AG04450 (cell line): ENCODE measurements at regions of chr2 and their contacts with region 1.

Region 1: DNA sequence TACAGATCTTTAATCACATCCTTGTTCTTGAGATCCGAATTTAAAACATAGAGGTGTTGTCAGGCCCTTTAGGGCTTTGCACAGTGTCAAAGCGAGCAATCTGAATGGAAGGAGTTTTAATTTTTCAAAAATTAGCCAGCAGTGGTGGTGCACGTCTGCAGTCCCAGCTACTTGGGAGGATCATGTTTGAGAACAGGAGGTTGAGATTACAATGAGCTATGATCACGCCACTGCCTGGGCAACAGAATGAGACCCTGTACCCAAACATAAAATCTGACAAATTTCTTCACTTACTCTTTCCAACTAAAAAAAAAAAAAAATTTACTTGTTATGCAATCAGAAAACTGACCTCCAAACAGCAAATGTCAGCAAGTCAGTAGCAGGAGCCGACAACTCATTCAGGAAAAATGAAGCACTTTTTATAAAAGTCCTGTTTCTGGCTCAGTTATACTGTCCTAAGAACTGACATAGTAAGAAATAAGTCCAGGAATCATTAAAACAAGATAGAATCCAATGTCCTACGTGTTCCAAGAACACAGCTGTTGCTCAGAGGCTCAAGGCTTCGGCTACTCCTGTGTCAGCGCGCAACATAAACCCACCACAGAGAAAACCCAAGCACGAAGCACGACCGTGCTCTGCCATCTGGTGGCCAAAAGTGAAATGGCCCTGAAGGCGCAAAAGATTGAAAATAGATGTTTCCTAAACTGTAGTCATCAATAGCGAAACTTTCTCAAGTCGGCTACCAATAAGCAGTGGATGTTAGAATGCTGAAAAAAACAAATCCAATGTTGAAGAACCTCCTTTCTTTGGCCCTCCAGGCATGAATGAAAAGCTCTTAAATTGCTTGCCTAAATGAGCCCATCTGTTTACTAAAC is 138.1 kb downstream of the INO80D start:
- DNase-seq: peak; percentile 65
- H3K4me3 ChIP-seq: 0 out of 2 replicates have a peak overlapping the region, but pooled peaks have one; percentile 13
- H3K27ac ChIP-seq: peak overlapping the region; percentile 21
- H3K27me3 ChIP-seq: peaks cover 9% of the 10 kb centered on the region
- CTCF ChIP-seq: peak; percentile 96

Region 2: DNA sequence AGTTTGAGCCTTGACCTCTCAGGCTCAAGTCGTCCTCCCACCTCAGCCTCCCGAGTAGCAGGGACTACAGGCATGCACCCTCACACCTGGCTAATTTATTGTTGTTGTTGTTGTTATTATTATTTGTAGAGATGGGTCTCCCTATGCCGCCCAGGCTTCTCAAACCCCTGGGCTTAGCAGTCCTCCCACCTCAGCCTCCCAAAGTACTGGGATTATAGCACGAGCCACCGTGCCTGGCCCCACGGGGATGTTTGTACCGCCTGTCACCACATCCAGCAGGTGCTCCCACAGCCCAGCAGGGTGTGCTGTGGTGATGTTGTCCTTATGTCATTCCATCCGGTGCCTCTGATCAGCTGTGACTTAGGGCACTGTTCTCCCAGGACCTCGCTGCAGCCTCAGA is 44.2 kb before region 1 on chr2:
- CTCF ChIA-PET with region 1: interaction called, 10 read pairs
- POLR2A ChIA-PET with region 1: no interaction called
- DNase-seq: no peak
- H3K4me3 ChIP-seq: no peak overlapping the region
- H3K27ac ChIP-seq: no peak overlapping the region
- H3K27me3 ChIP-seq: peaks cover 10% of the 10 kb centered on the region
- CTCF ChIP-seq: peak; percentile 10; the same call in 1 of the 2 replicates

Region 3: DNA sequence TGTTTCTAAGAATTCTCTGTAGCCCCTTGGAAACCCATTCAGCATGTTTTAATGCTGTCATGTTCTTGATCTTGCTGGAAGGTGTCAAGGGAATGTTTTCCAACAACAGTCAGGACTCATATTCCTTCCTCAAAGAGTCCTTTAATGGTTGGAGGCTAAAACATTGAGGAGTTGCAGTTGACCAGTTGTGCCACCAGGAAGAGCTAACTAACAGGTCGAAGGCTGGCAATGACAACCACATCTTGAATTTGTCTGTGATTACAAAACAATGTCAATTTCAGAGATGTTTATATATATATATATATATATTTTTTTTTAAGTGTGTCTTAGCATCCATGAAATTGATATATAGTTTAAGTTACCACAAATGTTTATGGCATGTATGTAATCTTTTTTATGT is 13.4 kb before region 1 on chr2:
- CTCF ChIA-PET with region 1: interaction called, 33 read pairs
- POLR2A ChIA-PET with region 1: no interaction called
- DNase-seq: no peak
- H3K4me3 ChIP-seq: no peak overlapping the region
- H3K27ac ChIP-seq: no peak overlapping the region
- H3K27me3 ChIP-seq: peaks cover 3% of the 10 kb centered on the region
- CTCF ChIP-seq: peak; percentile 31; the same call in 1 of the 2 replicates

Region 4: GRCh38 chr2:205967391-205968075 is 19.7 kb after region 1 on chr2:
- CTCF ChIA-PET with region 1: interaction called, 30 read pairs
- POLR2A ChIA-PET with region 1: no interaction called
- DNase-seq: no peak
- H3K4me3 ChIP-seq: no peak overlapping the region
- H3K27ac ChIP-seq: no peak overlapping the region
- H3K27me3 ChIP-seq: peaks cover 14% of the 10 kb centered on the region
- CTCF ChIP-seq: no peak

Region 5: DNA sequence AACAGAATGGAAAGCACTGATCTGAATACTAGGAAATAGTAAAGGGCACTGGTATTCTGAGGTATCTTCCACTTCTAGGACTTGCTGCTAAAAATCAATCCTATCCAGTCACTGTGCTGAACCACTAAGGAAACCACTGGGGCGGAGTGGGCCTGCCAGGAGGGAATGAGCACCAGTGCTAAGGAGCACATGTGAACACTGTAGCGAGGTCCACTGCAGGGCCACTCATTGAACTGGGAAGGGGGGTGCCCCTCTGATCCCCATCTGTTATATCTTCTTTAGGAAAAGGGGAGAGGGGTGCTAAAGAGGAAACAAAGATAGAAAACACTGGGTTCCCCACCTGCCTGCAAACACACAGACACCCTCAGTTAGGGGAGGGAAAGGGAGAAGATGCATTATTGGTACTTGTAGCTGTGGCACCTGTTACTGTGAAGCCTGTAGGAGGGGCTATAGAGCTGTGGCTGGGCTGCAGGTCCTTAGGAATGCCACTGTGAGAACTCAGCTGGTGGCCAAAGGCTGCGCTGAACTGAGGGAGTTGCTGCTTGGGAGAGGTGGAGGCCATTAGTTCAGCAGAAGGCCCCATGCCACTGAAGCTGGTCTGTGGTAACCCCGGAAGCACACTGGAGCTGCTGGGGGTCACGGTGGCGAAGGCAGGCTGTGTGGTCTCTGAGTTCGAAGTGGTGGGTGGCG is 56.3 kb after region 1 on chr2:
- CTCF ChIA-PET with region 1: no interaction called
- POLR2A ChIA-PET with region 1: no interaction called
- DNase-seq: no peak
- H3K4me3 ChIP-seq: no peak overlapping the region
- H3K27ac ChIP-seq: no peak overlapping the region
- H3K27me3 ChIP-seq: no peaks in the 10 kb centered on the region
- CTCF ChIP-seq: peak; percentile 31